Mammary epithelial cell (primary cell): ENCODE measurements at regions of chr12 and their contacts with region 1.

Region 1: GRCh38 chr12:61647566-61647965 is 612.6 kb upstream of the USP15 start:
- DNase-seq: no peak
- H3K4me3 ChIP-seq: no peak overlapping the region
- H3K27ac ChIP-seq: no peak overlapping the region
- H3K4me1 ChIP-seq: no peaks in the 10 kb centered on the region
- H3K27me3 ChIP-seq: no peaks in the 10 kb centered on the region
- CTCF ChIP-seq: no peak

Region 2: DNA sequence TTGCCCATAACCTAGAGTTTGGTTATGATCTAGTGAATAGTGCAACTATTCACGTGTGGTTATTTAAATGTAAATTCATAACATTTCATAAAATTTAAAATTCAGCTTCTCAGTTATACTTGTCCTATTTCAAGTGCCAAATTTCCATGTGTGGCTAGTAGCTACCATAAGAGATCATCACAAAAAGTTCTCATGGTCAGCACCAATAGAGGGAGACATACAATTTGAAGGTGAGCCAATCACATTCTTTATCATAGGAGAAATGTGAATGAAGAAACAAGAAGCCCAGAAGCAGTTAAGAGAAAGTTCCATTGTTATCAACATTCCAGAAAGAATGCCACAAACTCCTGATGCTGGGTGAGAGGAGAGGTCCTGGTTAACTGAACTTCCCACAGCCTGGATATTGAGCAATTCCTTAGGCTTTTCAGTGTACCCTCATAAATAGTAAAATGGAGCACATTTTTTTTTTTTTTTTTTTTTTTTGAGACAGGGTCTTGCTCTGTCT is 280.2 kb before region 1 on chr12:
- CTCF ChIA-PET with region 1: interaction called, 13 read pairs
- dilution Hi-C with region 1: no loop called
- in situ Hi-C with region 1: no loop called
- intact Hi-C with region 1: no loop called
- DNase-seq: no peak
- H3K4me3 ChIP-seq: no peak overlapping the region
- H3K27ac ChIP-seq: no peak overlapping the region
- H3K4me1 ChIP-seq: no peaks in the 10 kb centered on the region
- H3K27me3 ChIP-seq: no peaks in the 10 kb centered on the region
- CTCF ChIP-seq: peak in 1 of 2 donors; percentile 40